Heart left ventricle (tissue), 16 donors: ENCODE measurements at regions of chr13 and their contacts with region 1.

Region 1: GRCh38 chr13:50801087-50801931 is 42.2 kb downstream of the DLEU7 start:
- DNase-seq: peak in 4 of 5 donors; percentile 41 to 73 (median 58)
- ATAC-seq: peak; percentile 87 to 96 (median 94)
- H3K4me3 ChIP-seq: peak overlapping the region in 4 of 12 donors; percentile 12 to 22 (median 16)
- H3K27ac ChIP-seq: peak overlapping the region in 7 of 12 donors; percentile 0 to 72 (median 32)
- H3K4me1 ChIP-seq: peaks cover 0 to 32% (median 20%) of the 10 kb centered on the region in 12 donors
- H3K27me3 ChIP-seq: no peaks in the 10 kb centered on the region
- CTCF ChIP-seq: peak; percentile 66 to 84 (median 78)
- POLR2A ChIP-seq: no peak

Region 2: GRCh38 chr13:49976314-49977258 is 824.7 kb before region 1 on chr13:
- intact Hi-C with region 1: loop called (anchors 1 to 10 kb)
- DNase-seq: peak; percentile 50 to 79 (median 66)
- ATAC-seq: peak in 3 of 4 donors; percentile 80 to 85 (median 81)
- H3K4me3 ChIP-seq: no peak overlapping the region
- H3K27ac ChIP-seq: no peak overlapping the region
- H3K4me1 ChIP-seq: peaks cover 0 to 5% (median 0%) of the 10 kb centered on the region in 12 donors
- H3K27me3 ChIP-seq: no peaks in the 10 kb centered on the region
- CTCF ChIP-seq: peak; percentile 59 to 92 (median 89)
- POLR2A ChIP-seq: no peak

Region 3: DNA sequence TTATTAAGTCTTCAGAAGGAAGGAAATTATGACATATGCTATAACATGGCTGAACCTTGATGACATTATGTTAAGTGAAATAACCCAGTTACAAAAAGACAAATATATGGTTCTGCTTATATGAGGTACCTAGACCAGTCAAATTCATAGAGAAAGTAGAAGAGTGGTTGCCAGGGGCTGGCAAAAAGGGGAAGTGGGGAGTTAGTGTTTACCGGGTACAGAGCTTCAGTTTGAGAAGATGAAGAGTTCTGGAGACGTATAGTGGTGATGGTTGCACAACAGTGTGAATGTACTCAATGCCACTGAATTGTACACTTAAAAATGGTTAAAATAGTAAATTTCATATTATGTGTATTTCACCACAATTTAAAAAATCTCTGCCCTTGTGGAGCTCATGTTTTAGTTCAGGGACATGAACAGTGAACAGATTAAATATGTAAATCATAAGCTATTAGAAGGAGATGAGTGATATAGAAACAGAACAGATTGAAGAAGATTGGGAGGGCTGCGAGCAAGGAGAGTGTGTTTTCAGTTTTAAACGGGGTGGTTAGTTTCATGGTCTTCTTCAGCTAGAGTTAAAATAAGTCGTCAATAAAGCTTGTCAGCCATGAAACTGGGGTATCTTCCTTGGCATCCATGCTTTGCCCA is 430.9 kb before region 1 on chr13:
- intact Hi-C with region 1: loop called in 3 of 10 experiments (anchors 5 to 10 kb)
- DNase-seq: no peak
- ATAC-seq: no peak
- H3K4me3 ChIP-seq: no peak overlapping the region
- H3K27ac ChIP-seq: no peak overlapping the region
- H3K4me1 ChIP-seq: peaks cover 0 to 13% (median 0%) of the 10 kb centered on the region in 12 donors
- H3K27me3 ChIP-seq: no peaks in the 10 kb centered on the region
- CTCF ChIP-seq: no peak
- POLR2A ChIP-seq: no peak

Region 4: DNA sequence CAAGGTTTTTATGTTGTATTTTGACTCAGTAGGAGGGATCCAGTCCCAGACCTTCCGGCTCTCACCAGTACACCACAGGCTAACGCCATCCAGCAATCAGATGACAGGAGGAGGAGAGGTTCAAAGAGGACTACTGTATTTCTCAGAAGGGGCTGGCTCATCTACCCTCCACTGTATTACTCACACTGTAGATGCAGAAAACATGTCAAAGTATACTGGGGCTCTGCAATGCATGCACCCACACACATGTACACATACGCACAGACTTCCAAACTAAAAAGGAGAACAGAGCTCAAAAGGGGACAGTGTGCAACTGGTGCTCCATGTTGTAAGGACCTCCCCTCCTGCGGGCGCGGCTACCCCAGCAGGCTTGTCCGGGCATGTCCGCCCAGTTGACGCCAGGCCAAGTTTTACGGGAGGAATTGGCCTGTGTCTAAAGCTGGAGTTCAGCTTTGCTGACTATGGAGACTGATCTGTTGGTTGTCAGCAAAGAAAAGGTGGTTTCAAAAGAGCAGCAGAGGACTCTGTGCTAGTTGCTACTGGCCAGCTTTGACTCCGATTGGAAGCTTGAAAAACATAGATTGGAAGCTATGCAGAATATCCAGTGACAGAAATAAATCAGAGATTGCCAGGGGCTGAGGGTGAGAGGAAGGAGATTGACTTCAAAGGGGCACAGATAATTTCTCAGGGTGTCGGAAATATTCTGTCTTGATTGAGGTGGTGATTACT is 272.0 kb before region 1 on chr13:
- intact Hi-C with region 1: loop called in 9 of 10 experiments (anchors 2 to 10 kb)
- DNase-seq: peak; percentile 87 to 95 (median 91)
- ATAC-seq: peak; percentile 86 to 96 (median 94)
- H3K4me3 ChIP-seq: peak overlapping the region in 10 of 12 donors; percentile 6 to 41 (median 26)
- H3K27ac ChIP-seq: peak overlapping the region; percentile 50 to 85 (median 76)
- H3K4me1 ChIP-seq: peaks cover 5 to 51% (median 28%) of the 10 kb centered on the region in 12 donors
- H3K27me3 ChIP-seq: no peaks in the 10 kb centered on the region
- CTCF ChIP-seq: no peak
- POLR2A ChIP-seq: no peak

Region 5: GRCh38 chr13:50594276-50595051 is 206.8 kb before region 1 on chr13:
- intact Hi-C with region 1: loop called in 3 of 10 experiments (anchors 1 to 10 kb)
- DNase-seq: no peak
- ATAC-seq: no peak
- H3K4me3 ChIP-seq: peak overlapping the region in 1 of 12 donors; percentile 7
- H3K27ac ChIP-seq: peak overlapping the region in 6 of 12 donors; percentile 10 to 63 (median 28)
- H3K4me1 ChIP-seq: peaks cover 0 to 58% (median 29%) of the 10 kb centered on the region in 12 donors
- H3K27me3 ChIP-seq: no peaks in the 10 kb centered on the region
- CTCF ChIP-seq: no peak
- POLR2A ChIP-seq: no peak

Region 6: DNA sequence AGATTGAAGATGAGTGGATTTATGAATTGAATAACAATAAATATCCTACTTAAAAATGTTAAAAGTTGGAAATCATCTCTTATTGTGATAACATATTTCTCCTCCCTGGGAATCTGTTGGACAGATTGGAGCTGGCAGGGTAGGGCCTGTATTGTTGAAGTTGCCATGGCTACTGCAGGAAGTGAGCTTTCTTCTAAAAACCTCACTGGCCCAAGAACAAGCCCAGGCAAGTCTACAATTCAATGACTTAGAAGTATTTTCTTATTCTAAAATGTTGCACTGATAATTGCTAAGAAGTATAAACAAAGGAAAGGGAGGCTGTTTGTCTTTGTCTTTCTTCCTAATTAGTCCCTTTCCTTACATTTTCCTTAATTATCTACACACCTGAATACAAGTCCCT is 69.9 kb before region 1 on chr13:
- intact Hi-C with region 1: no loop called
- DNase-seq: peak in 2 of 5 donors; percentile 37 to 50
- ATAC-seq: peak in 2 of 4 donors; percentile 59 to 96
- H3K4me3 ChIP-seq: no peak overlapping the region
- H3K27ac ChIP-seq: peak overlapping the region in 9 of 12 donors; percentile 12 to 74 (median 54)
- H3K4me1 ChIP-seq: peaks cover 0 to 13% (median 4%) of the 10 kb centered on the region in 12 donors
- H3K27me3 ChIP-seq: no peaks in the 10 kb centered on the region
- CTCF ChIP-seq: no peak
- POLR2A ChIP-seq: no peak

Region 7: DNA sequence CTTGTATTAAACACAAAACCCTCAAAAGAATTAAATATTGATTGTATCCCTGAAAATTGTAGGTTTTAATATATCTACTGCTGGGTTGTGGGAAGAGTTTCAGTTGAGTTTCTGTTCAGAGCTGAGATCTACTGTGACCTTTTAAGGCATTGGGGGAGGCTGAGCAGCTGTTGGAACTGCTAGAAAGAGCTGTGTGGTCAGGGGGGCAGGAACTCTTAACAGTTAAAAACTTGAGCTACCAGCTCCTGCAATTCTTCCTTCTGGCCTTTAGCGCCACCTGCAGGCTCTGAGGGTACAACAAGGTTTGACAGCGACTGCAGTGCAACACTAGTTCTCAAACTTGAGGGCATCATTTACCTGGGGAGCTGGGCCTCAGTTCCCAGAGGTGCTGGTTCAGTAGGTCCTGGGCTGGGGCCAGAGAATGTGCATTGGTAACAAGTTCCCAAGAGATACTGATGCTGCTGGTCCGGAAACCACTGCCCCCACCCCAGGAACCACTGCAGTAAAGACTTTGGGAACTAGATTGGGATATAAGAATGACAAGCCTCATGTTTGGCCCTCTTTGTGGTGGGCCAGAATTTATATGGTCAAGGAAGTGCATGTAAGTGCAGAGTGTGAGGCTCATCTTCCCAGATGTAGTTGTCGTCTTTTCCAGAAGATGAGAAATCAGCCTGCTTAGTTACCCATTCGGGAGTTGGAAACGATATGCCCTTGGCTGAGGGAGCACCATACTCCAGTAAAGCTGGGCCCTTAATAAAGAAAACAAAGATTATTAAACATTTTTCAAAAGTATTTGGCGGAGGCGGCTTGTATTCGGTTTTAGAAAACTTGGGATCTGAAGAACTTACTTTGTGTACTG is 110.9 kb after region 1 on chr13:
- intact Hi-C with region 1: loop called in 3 of 10 experiments (anchors 5 to 10 kb)
- DNase-seq: peak; percentile 84 to 90 (median 86)
- ATAC-seq: peak; percentile 45 to 60 (median 52)
- H3K4me3 ChIP-seq: peak overlapping the region in 1 of 12 donors; percentile 70
- H3K27ac ChIP-seq: peak overlapping the region in 8 of 12 donors; percentile 1 to 93 (median 66)
- H3K4me1 ChIP-seq: peaks cover 0 to 70% (median 46%) of the 10 kb centered on the region in 12 donors
- H3K27me3 ChIP-seq: no peaks in the 10 kb centered on the region
- CTCF ChIP-seq: peak; percentile 77 to 91 (median 86)
- POLR2A ChIP-seq: no peak

Region 8: GRCh38 chr13:51202477-51203046 is 401.3 kb after region 1 on chr13:
- intact Hi-C with region 1: no loop called
- DNase-seq: no peak
- ATAC-seq: no peak
- H3K4me3 ChIP-seq: no peak overlapping the region
- H3K27ac ChIP-seq: no peak overlapping the region
- H3K4me1 ChIP-seq: no peaks in the 10 kb centered on the region
- H3K27me3 ChIP-seq: peaks cover 0 to 6% (median 0%) of the 10 kb centered on the region in 9 donors
- CTCF ChIP-seq: no peak
- POLR2A ChIP-seq: no peak

Region 9: DNA sequence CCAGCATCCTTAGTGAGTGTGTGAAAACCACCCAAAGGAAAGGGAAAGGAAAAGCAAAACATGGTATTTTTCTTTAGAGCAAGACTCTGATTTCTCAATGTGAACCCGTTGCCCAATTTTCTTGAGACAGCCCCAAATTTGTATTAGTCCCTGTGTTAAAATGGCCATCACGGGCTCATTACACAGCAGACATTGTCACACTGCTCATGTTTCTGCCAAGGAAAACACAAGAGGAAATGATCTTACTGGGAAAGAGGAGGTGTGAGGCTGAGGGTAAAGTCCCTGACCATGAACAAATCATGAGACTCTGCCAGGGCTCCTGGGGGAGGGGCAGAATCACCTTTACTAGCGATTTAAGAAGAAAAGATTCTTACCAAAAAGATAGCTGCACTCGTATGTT is 475.3 kb after region 1 on chr13:
- intact Hi-C with region 1: no loop called
- DNase-seq: no peak
- ATAC-seq: peak in 2 of 4 donors; percentile 47 to 49
- H3K4me3 ChIP-seq: no peak overlapping the region
- H3K27ac ChIP-seq: peak overlapping the region in 3 of 12 donors; percentile 25 to 61 (median 40)
- H3K4me1 ChIP-seq: peaks cover 0 to 52% (median 12%) of the 10 kb centered on the region in 12 donors
- H3K27me3 ChIP-seq: no peaks in the 10 kb centered on the region
- CTCF ChIP-seq: no peak
- POLR2A ChIP-seq: no peak

Region 10: GRCh38 chr13:51697181-51697580 is 895.9 kb after region 1 on chr13:
- intact Hi-C with region 1: no loop called
- DNase-seq: no peak
- ATAC-seq: no peak
- H3K4me3 ChIP-seq: no peak overlapping the region
- H3K27ac ChIP-seq: no peak overlapping the region
- H3K4me1 ChIP-seq: peaks cover 0 to 15% (median 0%) of the 10 kb centered on the region in 12 donors
- H3K27me3 ChIP-seq: no peaks in the 10 kb centered on the region
- CTCF ChIP-seq: no peak
- POLR2A ChIP-seq: no peak